Activated CD4-positive, alpha-beta T cell treated with anti-CD3 and anti-CD28 coated beads for 36 hours (primary cell): ENCODE measurements at regions of chr15 and their contacts with region 1.

Region 1: GRCh38 chr15:28901987-28902745 is 16.4 kb downstream of the APBA2 start:
- DNase-seq: no peak
- ATAC-seq: peak; percentile 44
- H3K4me3 Mint-ChIP-seq: no peak overlapping the region
- H3K27ac Mint-ChIP-seq: no peak overlapping the region
- H3K4me1 Mint-ChIP-seq: peaks cover 65% of the 10 kb centered on the region
- H3K27me3 Mint-ChIP-seq: no peaks in the 10 kb centered on the region

Region 2: DNA sequence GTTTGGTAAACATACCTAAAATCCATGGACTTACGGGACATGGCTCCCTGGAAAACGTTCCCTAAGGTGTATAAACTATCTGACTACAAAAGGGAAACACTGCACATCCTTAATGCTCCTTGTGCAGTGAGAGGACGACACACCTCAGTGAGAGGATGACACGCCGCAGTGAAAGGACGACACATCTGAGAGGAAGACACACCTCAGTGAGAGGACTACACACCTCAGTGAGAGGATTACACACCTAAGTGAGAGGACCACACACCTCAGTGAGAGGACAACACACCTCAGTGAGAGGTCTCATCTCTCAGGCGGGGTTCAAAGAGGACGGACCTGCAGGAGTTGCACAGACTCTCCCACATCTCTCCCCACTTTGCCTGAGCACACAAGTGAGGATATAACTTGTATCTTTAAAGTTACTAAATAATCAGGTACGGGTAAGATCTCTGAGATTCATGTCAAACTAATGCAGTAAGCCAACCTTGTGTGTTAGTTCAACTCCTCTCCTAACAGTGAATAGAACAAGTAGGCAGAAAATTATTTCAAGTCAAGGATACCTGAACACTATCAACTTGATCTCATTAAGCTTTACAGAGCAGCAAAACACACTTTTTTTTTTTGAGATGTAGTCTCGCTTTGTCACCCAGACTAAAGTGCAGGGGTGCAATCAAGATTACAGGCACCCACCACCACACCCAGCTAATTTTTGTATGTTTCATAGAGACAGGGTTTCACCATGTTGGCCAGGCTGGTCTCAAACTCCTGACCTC is 612.3 kb before region 1 on chr15:
- CTCF ChIA-PET with region 1: no interaction called
- POLR2A ChIA-PET with region 1: no interaction called
- intact Hi-C with region 1: no loop called
- DNase-seq: no peak
- ATAC-seq: no peak
- H3K4me3 Mint-ChIP-seq: no peak overlapping the region
- H3K27ac Mint-ChIP-seq: no peak overlapping the region
- H3K4me1 Mint-ChIP-seq: peaks cover 5% of the 10 kb centered on the region
- H3K27me3 Mint-ChIP-seq: no peaks in the 10 kb centered on the region

Region 3: DNA sequence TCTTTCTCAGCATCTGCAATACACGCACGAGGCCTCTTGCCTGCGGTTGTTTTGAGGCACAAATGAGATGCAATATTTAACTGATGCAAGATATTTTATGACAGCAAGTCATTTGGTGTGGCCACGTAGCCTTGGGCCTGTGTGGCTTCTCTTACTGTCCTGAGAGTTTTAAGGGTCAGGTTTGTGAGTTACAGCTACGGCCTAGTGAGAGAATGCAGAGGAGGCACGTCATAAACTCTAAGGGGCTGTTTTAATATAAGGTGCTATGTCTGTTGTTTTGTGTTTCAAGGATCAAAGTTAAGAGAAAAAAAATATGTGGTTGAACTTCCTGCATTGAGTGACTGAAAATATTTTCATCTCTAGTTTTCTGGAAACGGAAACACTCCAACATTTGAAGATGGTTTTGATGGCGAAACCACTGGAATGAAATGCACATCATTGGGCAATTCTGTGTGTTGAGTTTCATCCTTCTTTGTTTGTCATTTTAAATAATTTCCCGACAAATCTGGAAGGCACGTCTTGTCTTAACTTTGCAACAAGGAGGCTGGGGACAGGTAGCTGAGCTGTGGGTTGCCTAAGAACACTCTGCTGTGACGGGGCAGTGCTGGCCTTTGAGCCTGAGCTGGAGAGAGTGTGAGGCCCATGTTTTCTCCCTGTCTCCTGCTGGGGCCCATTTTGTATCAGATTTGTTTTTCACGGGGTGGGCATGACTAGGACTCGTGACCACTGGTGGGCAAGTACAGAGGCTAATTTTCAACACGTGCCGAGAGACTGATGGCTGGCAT is 11.3 kb before region 1 on chr15:
- CTCF ChIA-PET with region 1: interaction called, 10 read pairs
- POLR2A ChIA-PET with region 1: no interaction called
- intact Hi-C with region 1: no loop called
- DNase-seq: peak; percentile 54
- ATAC-seq: peak; percentile 57
- H3K4me3 Mint-ChIP-seq: peak overlapping the region; percentile 22
- H3K27ac Mint-ChIP-seq: peak overlapping the region; percentile 87
- H3K4me1 Mint-ChIP-seq: peaks cover 59% of the 10 kb centered on the region
- H3K27me3 Mint-ChIP-seq: no peaks in the 10 kb centered on the region

Region 4: GRCh38 chr15:28921919-28922706 is 19.9 kb after region 1 on chr15:
- CTCF ChIA-PET with region 1: no interaction called
- POLR2A ChIA-PET with region 1: interaction called, 3 read pairs
- intact Hi-C with region 1: loop called in 1 of 2 experiments (anchors 2 kb)
- DNase-seq: no peak
- ATAC-seq: no peak
- H3K4me3 Mint-ChIP-seq: no peak overlapping the region
- H3K27ac Mint-ChIP-seq: no peak overlapping the region
- H3K4me1 Mint-ChIP-seq: peaks cover 65% of the 10 kb centered on the region
- H3K27me3 Mint-ChIP-seq: no peaks in the 10 kb centered on the region

Region 5: DNA sequence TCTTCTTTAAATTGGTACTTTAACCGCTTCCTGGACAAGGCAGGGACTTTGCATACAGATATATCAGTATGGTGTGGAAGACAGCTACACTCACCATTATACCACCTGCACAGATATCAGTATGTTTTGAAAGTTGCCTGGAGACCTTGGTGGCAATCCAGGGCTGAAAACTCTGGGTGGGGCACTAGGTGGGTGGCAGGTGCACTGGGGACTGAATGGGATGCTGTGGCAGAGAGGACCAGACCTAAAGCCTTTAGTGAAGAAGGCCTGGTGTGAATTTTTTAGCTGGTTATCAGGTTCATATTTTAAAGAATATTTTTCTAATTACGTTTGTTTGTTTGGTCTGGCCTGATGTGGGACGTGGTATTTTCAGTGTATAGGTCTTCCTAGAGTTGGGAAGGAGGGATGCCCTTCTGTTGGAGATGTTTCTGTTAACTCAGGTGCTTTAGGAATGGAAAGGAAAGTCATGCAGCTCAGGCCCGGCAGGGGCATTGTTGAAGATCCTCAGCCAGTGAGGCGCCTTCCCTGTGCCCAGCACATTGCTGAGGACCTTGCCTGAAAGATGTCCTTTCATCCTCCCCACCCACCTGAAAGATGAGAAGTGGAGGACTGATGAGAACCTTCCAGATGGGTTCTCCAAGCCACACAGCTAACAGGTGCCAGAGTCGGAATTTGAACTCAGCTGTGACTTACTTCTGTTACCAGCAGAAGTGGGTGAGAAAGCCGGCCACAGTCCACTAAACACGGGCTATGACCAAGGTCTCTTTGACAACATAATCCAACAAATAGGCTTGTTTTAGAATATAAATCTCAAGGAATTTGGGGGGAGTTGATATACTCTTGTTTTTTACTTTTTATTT is 60.9 kb after region 1 on chr15:
- CTCF ChIA-PET with region 1: no interaction called
- POLR2A ChIA-PET with region 1: no interaction called
- intact Hi-C with region 1: no loop called
- DNase-seq: no peak
- ATAC-seq: peak; percentile 17
- H3K4me3 Mint-ChIP-seq: no peak overlapping the region
- H3K27ac Mint-ChIP-seq: no peak overlapping the region
- H3K4me1 Mint-ChIP-seq: peaks cover 42% of the 10 kb centered on the region
- H3K27me3 Mint-ChIP-seq: no peaks in the 10 kb centered on the region